CD8-positive, alpha-beta memory T cell (primary cell): ENCODE measurements at regions of chr6 and their contacts with region 1.

Region 1: GRCh38 chr6:129665555-129665954 is 44.4 kb downstream of the ARHGAP18 start:
- DNase-seq: no peak
- H3K4me3 ChIP-seq: no peak overlapping the region
- H3K4me3 Mint-ChIP-seq: no peak overlapping the region
- H3K27ac ChIP-seq: no peak overlapping the region
- H3K27ac Mint-ChIP-seq: peak overlapping the region in 1 of 8 donors; percentile 26
- H3K4me1 ChIP-seq: peaks cover 3% of the 10 kb centered on the region
- H3K4me1 Mint-ChIP-seq: peaks cover 19 to 36% (median 28%) of the 10 kb centered on the region in 3 donors
- H3K27me3 ChIP-seq: no peaks in the 10 kb centered on the region
- H3K27me3 Mint-ChIP-seq: peaks cover 0 to 3% of the 10 kb centered on the region in 2 donors

Region 2: DNA sequence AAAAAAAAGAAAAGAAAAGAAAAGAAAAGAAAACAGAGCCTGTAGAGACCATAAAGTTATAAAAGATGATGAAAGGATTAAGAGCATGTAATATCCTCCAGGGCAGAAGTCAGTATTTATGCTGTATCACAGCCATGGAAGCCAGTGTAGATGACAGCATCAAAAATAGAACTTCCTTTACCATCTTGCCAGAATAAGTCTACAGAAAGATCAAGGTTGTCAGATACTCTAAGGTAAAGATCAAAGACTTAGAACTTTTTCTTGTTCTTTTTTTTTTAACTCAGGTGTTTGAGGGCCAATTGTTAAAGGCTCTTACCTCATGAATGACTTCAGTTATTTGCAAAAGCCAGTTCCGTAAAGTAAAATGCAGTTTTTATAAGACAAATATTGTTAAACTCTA is 10.2 kb before region 1 on chr6:
- CTCF ChIA-PET with region 1: interaction called, 3 read pairs
- POLR2A ChIA-PET with region 1: interaction called, 11 read pairs
- DNase-seq: peak in 1 of 5 donors; percentile 30
- H3K4me3 ChIP-seq: no peak overlapping the region
- H3K4me3 Mint-ChIP-seq: no peak overlapping the region
- H3K27ac ChIP-seq: no peak overlapping the region
- H3K27ac Mint-ChIP-seq: no peak overlapping the region
- H3K4me1 ChIP-seq: no peaks in the 10 kb centered on the region
- H3K4me1 Mint-ChIP-seq: peaks cover 0 to 15% (median 14%) of the 10 kb centered on the region in 3 donors
- H3K27me3 ChIP-seq: no peaks in the 10 kb centered on the region
- H3K27me3 Mint-ChIP-seq: no peaks in the 10 kb centered on the region

Region 3: GRCh38 chr6:130148181-130148580 is 482.6 kb after region 1 on chr6:
- CTCF ChIA-PET with region 1: no interaction called
- POLR2A ChIA-PET with region 1: no interaction called
- DNase-seq: peak in 1 of 5 donors; percentile 4
- H3K4me3 ChIP-seq: no peak overlapping the region
- H3K4me3 Mint-ChIP-seq: no peak overlapping the region
- H3K27ac ChIP-seq: no peak overlapping the region
- H3K27ac Mint-ChIP-seq: peak overlapping the region; percentile 29 to 91 (median 60)
- H3K4me1 ChIP-seq: no peaks in the 10 kb centered on the region
- H3K4me1 Mint-ChIP-seq: peaks cover 19 to 52% (median 23%) of the 10 kb centered on the region in 3 donors
- H3K27me3 ChIP-seq: no peaks in the 10 kb centered on the region
- H3K27me3 Mint-ChIP-seq: peaks cover 0 to 4% of the 10 kb centered on the region in 2 donors